ENCODE measurements at regions of chr19 and their contacts with region 1.

Region 1: DNA sequence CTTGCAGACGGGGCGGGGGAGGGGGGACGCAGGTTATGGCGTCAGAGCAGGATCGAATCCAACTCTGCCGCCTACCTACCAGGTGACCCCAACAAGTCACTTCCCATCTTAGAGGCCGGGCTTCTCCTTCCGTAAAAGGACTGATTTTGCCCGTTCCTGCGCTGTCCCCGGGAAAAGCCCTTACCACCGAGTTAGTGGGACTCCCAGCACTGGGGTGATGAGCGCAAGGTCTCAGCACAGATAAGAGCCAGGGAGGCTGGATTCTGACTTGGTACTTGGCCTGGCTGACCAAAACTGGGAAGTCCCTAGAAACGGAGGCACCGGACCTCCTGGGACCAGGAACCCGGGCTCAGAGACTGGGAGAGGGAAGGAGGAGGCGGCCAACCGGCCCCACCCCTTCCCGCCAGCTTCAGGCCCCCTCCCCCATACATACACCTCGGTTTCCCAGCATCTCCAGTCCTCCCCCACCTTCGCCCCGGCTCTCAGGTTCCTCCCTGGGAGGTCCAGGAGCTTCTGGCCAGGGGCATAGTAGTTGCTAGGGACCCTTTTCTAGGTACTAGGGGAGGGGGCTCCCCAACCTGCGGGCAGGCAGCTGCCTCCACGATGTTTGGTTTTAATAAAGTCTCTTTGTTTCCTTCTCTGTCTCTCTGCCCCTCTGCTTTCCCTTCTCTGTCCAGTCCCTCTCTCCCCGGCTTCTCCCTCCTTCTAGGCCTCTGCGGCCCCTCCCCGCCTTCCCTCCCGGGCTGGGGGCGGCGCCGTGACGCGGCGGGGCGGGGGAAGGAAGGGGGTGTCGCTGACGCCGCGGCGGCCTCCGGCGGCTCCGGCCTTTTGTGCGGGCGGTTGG is at the start of gene GRAMD1A:
- DNase-seq: peak; percentile 48 to 86 (median 63)
- ATAC-seq: peak; percentile 74
- H3K4me3 ChIP-seq: peak within 1 kb of the TSS; percentile 72
- H3K4me3 Mint-ChIP-seq: peak within 1 kb of the TSS; percentile 94 to 100 (median 98)
- H3K27ac ChIP-seq: peak within 1 kb of the TSS; percentile 97
- H3K27ac Mint-ChIP-seq: peak within 1 kb of the TSS; percentile 95 to 100 (median 98)
- H3K4me1 ChIP-seq: peaks cover 66 to 72% of the 10 kb centered on the region in 2 donors
- H3K4me1 Mint-ChIP-seq: peaks cover 58 to 81% (median 73%) of the 10 kb centered on the region in 7 donors
- H3K27me3 ChIP-seq: no peaks in the 10 kb centered on the region
- H3K27me3 Mint-ChIP-seq: no peaks in the 10 kb centered on the region
- total RNA-seq, gene GRAMD1A: 90.1 to 286 (median 253) TPM

Region 2: DNA sequence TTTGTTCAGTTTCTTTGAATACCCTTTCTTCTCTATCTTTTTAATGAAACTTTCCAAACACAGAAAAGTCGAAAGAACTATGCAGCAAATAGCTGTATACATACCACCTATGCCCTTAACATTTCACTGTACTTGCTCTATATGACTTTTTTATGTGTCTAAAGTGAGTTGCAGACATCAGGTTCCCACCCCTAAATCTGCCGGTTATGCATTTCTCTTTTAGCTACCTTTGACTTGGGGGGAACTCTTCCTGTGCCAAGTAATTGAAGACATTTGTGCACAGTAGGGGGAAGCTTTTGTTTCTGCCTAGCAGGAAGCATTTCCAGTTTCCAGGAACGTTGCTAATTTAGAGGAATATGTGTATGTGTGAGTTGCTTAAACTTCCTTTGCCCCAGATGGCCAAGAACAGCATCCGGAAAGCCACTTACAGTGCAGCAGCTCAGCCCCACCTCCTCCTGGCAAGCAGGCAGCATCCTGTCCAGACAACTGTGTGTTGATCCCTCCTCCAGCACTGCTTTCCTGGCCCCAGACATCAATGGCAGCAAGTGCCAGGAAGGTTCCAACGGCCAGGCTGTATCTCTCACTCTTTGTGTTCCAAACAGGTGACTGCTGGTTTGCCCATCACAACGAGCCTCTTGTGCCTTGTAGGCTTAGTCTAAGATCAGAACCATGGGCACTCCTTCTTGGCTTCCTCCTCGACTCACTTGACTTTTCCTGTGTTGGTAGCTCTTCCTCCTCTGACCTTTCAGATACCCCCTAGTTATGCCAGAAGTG is 14.3 kb before region 1 on chr19:
- CTCF ChIA-PET with region 1: interaction called, 4 read pairs
- POLR2A ChIA-PET with region 1: interaction called, 38 read pairs
- intact Hi-C with region 1: loop called in 1 of 2 experiments (anchors 1 kb)
- DNase-seq: peak in 3 of 9 donors; percentile 28 to 38 (median 29)
- ATAC-seq: peak; percentile 44
- H3K4me3 ChIP-seq: no peak overlapping the region
- H3K4me3 Mint-ChIP-seq: peak overlapping the region; percentile 13 to 82 (median 70)
- H3K27ac ChIP-seq: peak overlapping the region; percentile 29
- H3K27ac Mint-ChIP-seq: peak overlapping the region; percentile 45 to 92 (median 89)
- H3K4me1 ChIP-seq: peaks cover 7 to 12% of the 10 kb centered on the region in 2 donors
- H3K4me1 Mint-ChIP-seq: peaks cover 14 to 48% (median 21%) of the 10 kb centered on the region in 7 donors
- H3K27me3 ChIP-seq: no peaks in the 10 kb centered on the region
- H3K27me3 Mint-ChIP-seq: no peaks in the 10 kb centered on the region

Region 3: DNA sequence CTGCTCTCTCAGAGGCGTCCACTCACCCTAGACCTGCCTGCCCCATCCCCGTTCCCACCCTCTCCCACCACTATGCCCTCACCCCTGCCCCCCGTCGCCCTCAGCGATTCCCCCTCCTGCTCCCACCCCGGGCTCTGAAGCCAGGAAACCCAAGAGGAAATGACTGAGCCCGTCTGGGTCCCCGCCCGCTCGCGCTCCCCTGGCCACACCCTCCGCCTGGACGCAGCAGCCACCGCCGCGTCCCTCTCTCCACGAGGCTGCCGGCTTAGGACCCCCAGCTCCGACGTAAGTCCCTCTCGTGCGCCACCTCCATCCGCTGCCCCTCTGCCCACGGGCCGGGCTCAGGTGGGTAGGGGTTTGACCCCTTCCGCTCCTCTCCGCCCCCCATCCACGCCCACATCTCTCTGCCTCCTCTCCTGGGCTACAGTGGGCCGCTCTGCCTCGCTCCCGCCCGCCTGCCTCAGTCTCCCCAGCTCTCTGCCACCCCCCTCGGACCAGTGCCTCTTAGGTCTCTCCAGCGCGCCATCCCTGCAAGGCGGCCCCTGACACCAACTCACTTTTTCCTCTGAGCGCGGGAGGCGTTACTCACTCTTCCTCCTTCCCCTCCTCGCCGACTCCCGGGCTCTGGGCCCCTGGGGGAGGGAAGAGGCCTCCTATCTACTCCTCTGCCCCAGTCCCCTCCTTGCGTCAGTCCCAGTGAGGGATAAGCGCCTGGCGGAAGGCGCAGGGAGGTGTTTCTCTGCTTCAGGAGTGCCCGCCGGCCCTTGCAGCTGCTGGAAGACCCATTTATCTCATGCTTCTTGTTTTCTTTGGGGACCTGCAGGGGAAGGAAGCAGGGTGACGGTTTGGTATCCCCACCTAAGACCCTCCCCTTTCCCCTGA is 155.0 kb after region 1 on chr19 and contains the start of gene FXYD5:
- CTCF ChIA-PET with region 1: no interaction called
- POLR2A ChIA-PET with region 1: no interaction called
- intact Hi-C with region 1: no loop called
- DNase-seq: peak; percentile 41 to 81 (median 65)
- ATAC-seq: peak; percentile 82
- H3K4me3 ChIP-seq: peak within 1 kb of the TSS; percentile 93
- H3K4me3 Mint-ChIP-seq: peak within 1 kb of the TSS; percentile 98 to 100 (median 99)
- H3K27ac ChIP-seq: peak within 1 kb of the TSS; percentile 94
- H3K27ac Mint-ChIP-seq: peak within 1 kb of the TSS; percentile 96 to 99 (median 99)
- H3K4me1 ChIP-seq: peaks cover 23 to 32% of the 10 kb centered on the region in 2 donors
- H3K4me1 Mint-ChIP-seq: peaks cover 38 to 60% (median 55%) of the 10 kb centered on the region in 7 donors
- H3K27me3 ChIP-seq: no peaks in the 10 kb centered on the region
- H3K27me3 Mint-ChIP-seq: peaks cover 0 to 5% (median 0%) of the 10 kb centered on the region in 5 donors
- total RNA-seq, gene FXYD5: 362 to 458 (median 387) TPM

Measured in naive thymus-derived CD4-positive, alpha-beta T cell (primary cell).